ENCODE measurements at regions of chr18 and their contacts with region 1.

Region 1: DNA sequence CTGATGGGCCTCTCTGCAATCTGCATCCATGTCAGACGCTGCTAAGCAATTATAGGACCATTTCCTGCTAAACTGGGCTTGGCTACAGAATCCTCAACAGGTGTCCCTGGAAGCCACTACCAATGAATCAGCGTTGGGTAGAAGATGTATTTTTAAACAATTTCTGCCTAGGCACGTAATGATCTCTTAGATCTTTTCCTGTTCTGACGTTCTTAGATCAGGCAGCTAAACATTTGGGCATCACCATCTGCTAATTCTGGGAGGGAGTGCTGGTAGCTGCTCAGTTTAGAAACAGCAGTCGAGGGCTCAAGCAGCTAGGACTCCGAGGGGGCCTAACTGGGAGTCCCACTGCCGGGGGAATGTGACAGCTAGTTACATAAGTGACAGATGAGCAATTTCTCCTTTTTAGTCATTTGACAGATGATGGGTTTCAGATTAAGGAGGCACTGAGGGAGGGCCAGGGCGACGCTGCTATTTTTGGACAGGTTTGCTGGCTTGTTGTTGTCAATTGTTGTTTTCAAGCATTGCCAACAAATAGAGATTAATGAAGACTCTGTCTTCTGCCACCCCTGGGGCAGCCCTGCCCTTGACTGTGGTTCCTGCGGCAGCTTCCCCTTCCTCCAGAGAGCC is 92.7 kb downstream of the MRO start:
- DNase-seq: peak in 5 of 10 donors; percentile 21 to 64 (median 61)
- H3K4me3 ChIP-seq: no peak overlapping the region
- H3K27ac ChIP-seq: peak overlapping the region in 54 of 59 donors; percentile 11 to 88 (median 72)
- H3K27me3 ChIP-seq: no peaks in the 10 kb centered on the region
- CTCF ChIP-seq: no peak

Region 2: DNA sequence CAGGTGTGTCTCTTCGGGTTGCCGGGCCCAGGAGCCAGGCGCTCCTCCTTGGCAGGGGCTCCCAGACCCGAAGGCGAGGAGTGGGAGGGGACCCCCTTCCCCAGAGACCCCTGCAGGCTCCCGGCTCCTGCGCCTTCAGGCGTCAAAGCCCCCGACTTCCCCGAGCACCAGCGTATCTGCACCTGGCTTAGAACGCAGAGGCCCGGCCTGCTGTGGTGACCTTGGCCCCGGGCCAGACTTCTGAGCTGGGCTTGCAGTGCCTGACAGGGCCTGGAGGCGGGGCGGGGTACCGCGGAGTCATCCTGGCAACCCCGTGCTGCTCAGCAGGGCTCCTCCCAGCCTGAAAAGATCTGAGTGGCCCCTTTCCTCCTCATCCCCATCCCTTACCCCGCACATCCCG is 325.2 kb before region 1 on chr18:
- intact Hi-C with region 1: no loop called
- DNase-seq: no peak
- H3K4me3 ChIP-seq: no peak overlapping the region
- H3K27ac ChIP-seq: no peak overlapping the region
- H3K27me3 ChIP-seq: peaks cover 0 to 59% (median 15%) of the 10 kb centered on the region in 45 donors
- CTCF ChIP-seq: no peak

Region 3: GRCh38 chr18:50469380-50469781 is 257.7 kb before region 1 on chr18:
- intact Hi-C with region 1: no loop called
- DNase-seq: peak in 6 of 10 donors; percentile 19 to 60 (median 41)
- H3K4me3 ChIP-seq: no peak overlapping the region
- H3K27ac ChIP-seq: peak overlapping the region in 3 of 59 donors; percentile 20 to 60 (median 49)
- H3K27me3 ChIP-seq: no peaks in the 10 kb centered on the region
- CTCF ChIP-seq: no peak

Region 4: GRCh38 chr18:50590593-50590992 is 136.5 kb before region 1 on chr18:
- intact Hi-C with region 1: no loop called
- DNase-seq: peak in 1 of 10 donors; percentile 45
- H3K4me3 ChIP-seq: no peak overlapping the region
- H3K27ac ChIP-seq: peak overlapping the region in 5 of 59 donors; percentile 6 to 51 (median 21)
- H3K27me3 ChIP-seq: no peaks in the 10 kb centered on the region
- CTCF ChIP-seq: no peak

Region 5: GRCh38 chr18:50662177-50662576 is 64.9 kb before region 1 on chr18:
- intact Hi-C with region 1: loop called in 1 of 2 experiments (anchors 5 kb)
- DNase-seq: no peak
- H3K4me3 ChIP-seq: no peak overlapping the region
- H3K27ac ChIP-seq: peak overlapping the region in 32 of 59 donors; percentile 3 to 80 (median 65)
- H3K27me3 ChIP-seq: no peaks in the 10 kb centered on the region
- CTCF ChIP-seq: peak in 23 of 56 donors; percentile 4 to 36 (median 19)